Panc1 (cell line): ENCODE measurements at regions of chr22 and their contacts with region 1.

Region 1: GRCh38 chr22:20916983-20917810 is at the start of gene CRKL:
- DNase-seq: peak; percentile 80
- ATAC-seq: peak; percentile 98
- H3K4me3 ChIP-seq: peak within 1 kb of the TSS; percentile 80 to 89
- H3K27ac ChIP-seq: peak within 1 kb of the TSS; percentile 91
- H3K4me1 ChIP-seq: peaks cover 8% of the 10 kb centered on the region; the same call in 1 of the 2 replicates
- H3K27me3 ChIP-seq: no peaks in the 10 kb centered on the region
- CTCF ChIP-seq: peak; percentile 93
- total RNA-seq, gene CRKL: 59.4 TPM

Region 2: DNA sequence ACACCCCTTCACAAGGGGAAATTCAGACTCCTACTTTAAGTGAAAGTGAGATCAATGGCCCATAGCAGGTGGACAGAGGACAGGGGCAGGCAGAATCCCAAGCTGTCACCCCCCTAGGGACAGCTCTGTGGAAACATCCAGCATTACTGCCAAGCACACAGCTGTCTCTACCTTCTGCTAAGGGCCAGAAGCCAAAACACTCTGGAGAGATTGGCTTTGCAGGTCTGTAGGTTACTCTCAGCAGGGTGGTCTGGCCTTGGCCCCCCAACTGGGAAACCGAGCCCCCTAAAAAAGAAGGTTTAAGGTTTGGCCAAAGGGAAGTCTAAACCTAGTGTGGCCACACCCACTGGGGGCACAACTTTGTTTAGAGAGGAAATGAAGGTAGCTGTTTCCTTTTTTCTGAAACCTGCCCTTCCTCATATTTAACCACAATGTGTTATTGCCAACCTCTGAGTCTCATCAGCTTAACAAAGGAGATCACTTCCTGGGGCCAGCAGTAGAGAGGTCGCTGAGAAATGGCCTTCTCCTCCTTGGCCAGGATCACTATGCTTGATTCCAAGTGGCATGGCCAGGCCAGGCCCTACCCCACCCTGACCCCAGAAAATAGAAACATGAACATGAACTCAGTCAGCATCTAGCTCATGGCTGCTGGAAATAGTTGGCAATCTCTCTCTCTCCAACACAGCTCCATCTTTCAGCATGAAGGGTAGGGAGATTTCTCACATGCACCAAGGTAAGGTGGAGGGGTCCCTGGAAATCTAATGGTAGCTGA is 453.7 kb before region 1 on chr22:
- CTCF ChIA-PET with region 1: no interaction called
- POLR2A ChIA-PET with region 1: no interaction called
- in situ Hi-C with region 1: no loop called
- intact Hi-C with region 1: no loop called
- DNase-seq: no peak
- ATAC-seq: no peak
- H3K4me3 ChIP-seq: no peak overlapping the region
- H3K27ac ChIP-seq: no peak overlapping the region
- H3K4me1 ChIP-seq: no peaks in the 10 kb centered on the region
- H3K27me3 ChIP-seq: no peaks in the 10 kb centered on the region
- CTCF ChIP-seq: no peak

Region 3: DNA sequence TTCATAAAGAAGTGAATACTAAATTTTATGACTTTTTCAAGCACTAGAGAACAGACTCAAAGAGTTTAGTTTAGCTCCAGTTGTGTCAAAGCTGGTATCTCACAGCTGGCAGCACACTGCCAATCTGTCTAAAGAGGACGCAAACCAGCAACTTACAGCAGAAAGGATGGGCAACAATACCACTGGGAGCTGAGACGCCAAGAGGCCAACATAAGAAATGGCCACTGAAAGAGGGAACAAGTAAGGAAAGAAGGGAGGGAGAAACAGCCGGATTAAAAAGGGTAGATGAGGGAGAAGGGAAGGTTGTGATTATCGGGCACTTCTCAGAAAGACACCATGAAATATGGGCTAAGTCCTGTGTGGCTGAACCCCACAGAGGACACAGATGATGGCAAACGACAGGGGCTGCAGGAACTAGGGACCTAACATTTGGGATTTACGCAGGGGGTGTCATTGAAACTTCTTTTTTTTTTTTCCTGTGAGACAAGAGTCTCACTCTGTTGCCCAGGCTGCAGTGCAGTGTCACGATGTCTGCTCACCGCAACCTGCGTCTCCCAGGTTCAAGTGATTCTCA is 101.6 kb before region 1 on chr22:
- CTCF ChIA-PET with region 1: no interaction called
- POLR2A ChIA-PET with region 1: interaction called, 19 read pairs
- in situ Hi-C with region 1: no loop called
- intact Hi-C with region 1: no loop called
- DNase-seq: no peak
- ATAC-seq: no peak
- H3K4me3 ChIP-seq: no peak overlapping the region
- H3K27ac ChIP-seq: no peak overlapping the region
- H3K4me1 ChIP-seq: no peaks in the 10 kb centered on the region
- H3K27me3 ChIP-seq: no peaks in the 10 kb centered on the region
- CTCF ChIP-seq: no peak

Region 4: GRCh38 chr22:20859606-20860308 is 57.4 kb before region 1 on chr22:
- CTCF ChIA-PET with region 1: no interaction called
- POLR2A ChIA-PET with region 1: no interaction called
- in situ Hi-C with region 1: no loop called
- intact Hi-C with region 1: no loop called
- DNase-seq: no peak
- ATAC-seq: no peak
- H3K4me3 ChIP-seq: peak overlapping the region; percentile 81 to 92
- H3K27ac ChIP-seq: peak overlapping the region; percentile 86
- H3K4me1 ChIP-seq: peaks cover 12% of the 10 kb centered on the region
- H3K27me3 ChIP-seq: no peaks in the 10 kb centered on the region
- CTCF ChIP-seq: no peak

Region 5: GRCh38 chr22:20957316-20958101 is 40.3 kb after region 1 on chr22:
- CTCF ChIA-PET with region 1: interaction called, 15 read pairs
- POLR2A ChIA-PET with region 1: interaction called, 4 read pairs
- in situ Hi-C with region 1: no loop called
- intact Hi-C with region 1: no loop called
- DNase-seq: no peak
- ATAC-seq: peak; percentile 84
- H3K4me3 ChIP-seq: peak overlapping the region; percentile 67 to 85
- H3K27ac ChIP-seq: peak overlapping the region; percentile 90
- H3K4me1 ChIP-seq: peaks cover 24% of the 10 kb centered on the region
- H3K27me3 ChIP-seq: no peaks in the 10 kb centered on the region
- CTCF ChIP-seq: no peak

Region 6: GRCh38 chr22:22219140-22219996 is 1302.2 kb after region 1 on chr22:
- CTCF ChIA-PET with region 1: no interaction called
- POLR2A ChIA-PET with region 1: no interaction called
- in situ Hi-C with region 1: no loop called
- intact Hi-C with region 1: no loop called
- DNase-seq: no peak
- ATAC-seq: no peak
- H3K4me3 ChIP-seq: no peak overlapping the region
- H3K27ac ChIP-seq: no peak overlapping the region
- H3K4me1 ChIP-seq: no peaks in the 10 kb centered on the region
- H3K27me3 ChIP-seq: no peaks in the 10 kb centered on the region
- CTCF ChIP-seq: no peak